K562 (cell line): ENCODE measurements at regions of chr4 and their contacts with region 1.

Region 1: DNA sequence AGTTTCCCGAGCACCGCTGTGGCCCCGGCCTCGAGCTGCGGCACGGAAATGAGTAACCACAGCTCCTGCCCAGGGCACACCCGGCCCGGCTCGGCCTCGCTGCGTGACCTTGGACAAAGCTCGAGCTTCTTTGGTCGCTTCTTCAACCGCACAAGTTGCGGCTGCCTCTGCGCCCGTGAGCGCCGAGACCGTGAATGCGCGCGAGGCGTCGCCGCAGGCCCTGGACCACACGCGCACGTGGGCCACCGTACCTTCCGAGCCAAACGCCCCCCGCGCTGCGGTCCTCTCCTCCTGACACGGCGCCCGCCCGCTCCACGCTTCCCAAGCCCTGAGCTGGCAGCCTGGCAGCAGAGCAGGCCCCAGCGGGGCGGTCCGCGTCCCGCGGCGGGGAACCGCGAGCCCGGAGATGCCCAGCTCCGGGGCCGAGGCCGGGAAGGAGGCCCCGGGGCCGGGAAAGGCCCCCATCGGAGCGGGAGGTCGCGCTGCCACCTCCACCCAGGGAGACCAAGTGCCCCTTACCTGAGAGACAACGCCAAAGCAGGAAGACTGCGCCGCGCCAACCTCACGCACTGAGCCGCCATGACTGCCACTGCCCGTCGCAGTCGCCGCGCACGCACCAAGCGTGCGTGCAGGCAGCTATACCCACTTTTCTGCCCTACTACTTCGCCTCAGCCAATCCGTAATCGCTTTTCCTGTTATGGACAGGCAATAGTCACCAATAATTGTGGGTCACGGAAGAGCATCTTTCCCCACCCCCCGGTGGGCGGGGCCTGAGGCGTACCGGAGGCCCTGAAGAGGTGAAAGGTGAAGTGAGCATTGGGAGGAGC is at the start of gene GRPEL1:
- DNase-seq: peak; percentile 71 to 99 (median 86)
- ATAC-seq: peak; percentile 90
- H3K4me3 ChIP-seq: peak within 1 kb of the TSS; percentile 58
- H3K27ac ChIP-seq: peak within 1 kb of the TSS; percentile 76
- H3K4me1 ChIP-seq: peaks cover 15 to 40% of the 10 kb centered on the region in 2 experiments; a peak in 4 of 5 replicates
- H3K27me3 ChIP-seq: no peaks in the 10 kb centered on the region
- CTCF ChIP-seq: no peak
- EP300 ChIP-seq: no peak
- POLR2A ChIP-seq: peak; percentile 94
- RAD21 ChIP-seq: no peak
- polyA plus RNA-seq, gene GRPEL1: 125 to 192 TPM

Region 2: DNA sequence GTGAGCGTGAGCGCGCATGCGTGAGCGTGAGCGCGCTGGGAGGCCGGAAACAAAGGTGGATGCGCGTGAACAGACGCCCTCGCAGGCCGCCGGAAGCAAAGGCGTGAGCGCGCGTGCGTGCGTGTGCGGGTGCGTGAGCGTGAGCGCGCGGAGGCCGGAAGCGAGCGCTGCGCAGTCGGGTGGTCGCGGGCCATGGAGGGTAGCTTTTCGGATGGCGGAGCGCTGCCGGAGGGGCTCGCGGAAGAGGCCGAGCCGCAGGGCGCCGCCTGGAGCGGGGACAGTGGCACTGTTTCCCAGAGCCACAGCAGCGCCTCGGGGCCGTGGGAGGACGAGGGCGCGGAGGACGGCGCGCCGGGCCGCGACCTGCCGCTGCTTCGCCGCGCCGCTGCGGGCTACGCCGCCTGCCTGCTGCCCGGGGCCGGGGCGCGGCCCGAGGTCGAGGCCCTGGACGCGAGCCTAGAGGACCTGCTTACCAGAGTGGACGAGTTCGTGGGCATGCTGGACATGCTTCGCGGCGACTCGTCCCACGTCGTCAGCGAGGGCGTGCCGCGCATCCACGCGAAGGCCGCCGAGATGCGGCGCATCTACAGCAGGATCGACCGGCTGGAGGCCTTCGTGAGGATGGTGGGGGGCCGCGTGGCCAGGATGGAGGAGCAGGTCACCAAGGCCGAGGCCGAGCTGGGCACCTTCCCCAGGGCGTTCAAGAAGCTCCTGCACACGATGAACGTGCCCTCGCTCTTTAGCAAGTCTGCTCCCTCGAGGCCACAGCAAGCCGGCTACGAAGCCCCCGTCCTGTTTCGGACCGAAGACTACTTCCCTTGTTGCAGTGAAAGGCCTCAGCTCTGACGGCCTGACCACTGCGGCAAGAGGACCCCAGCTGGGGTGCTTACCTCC is 351.4 kb before region 1 on chr4 and contains the start of gene BLOC1S4:
- CTCF ChIA-PET with region 1: interaction called, 12 read pairs
- POLR2A ChIA-PET with region 1: interaction called, 5 read pairs
- in situ Hi-C with region 1: loop called (anchors 5 kb)
- intact Hi-C with region 1: loop called (anchors 2 kb)
- DNase-seq: peak; percentile 94 to 96 (median 95)
- ATAC-seq: peak; percentile 78
- H3K4me3 ChIP-seq: peak within 1 kb of the TSS; percentile 58
- H3K27ac ChIP-seq: peak within 1 kb of the TSS; percentile 94
- H3K4me1 ChIP-seq: peaks cover 22 to 23% of the 10 kb centered on the region in 2 experiments; a peak in 4 of 5 replicates
- H3K27me3 ChIP-seq: no peaks in the 10 kb centered on the region
- CTCF ChIP-seq: peak in 2 of 3 experiments; percentile 14 to 26; a peak in 2 of 6 replicates
- EP300 ChIP-seq: no peak
- POLR2A ChIP-seq: peak; percentile 81
- RAD21 ChIP-seq: 0 out of 4 replicates have a peak, but pooled peaks of 1 of the 2 experiments have one; percentile 13
- polyA plus RNA-seq, gene BLOC1S4: 3.1 to 3.9 TPM

Region 3: GRCh38 chr4:6892190-6892908 is 175.3 kb before region 1 on chr4:
- CTCF ChIA-PET with region 1: no interaction called
- POLR2A ChIA-PET with region 1: no interaction called
- in situ Hi-C with region 1: no loop called
- intact Hi-C with region 1: loop called (anchors 5 kb)
- DNase-seq: peak; percentile 89 to 93 (median 89)
- ATAC-seq: peak; percentile 89
- H3K4me3 ChIP-seq: peak overlapping the region; percentile 1; the same call in 1 of the 2 replicates
- H3K27ac ChIP-seq: peak overlapping the region; percentile 80
- H3K4me1 ChIP-seq: peaks cover 35 to 60% of the 10 kb centered on the region in 2 experiments
- H3K27me3 ChIP-seq: no peaks in the 10 kb centered on the region
- CTCF ChIP-seq: peak; percentile 32 to 62 (median 53); a peak in 5 of 6 replicates
- EP300 ChIP-seq: no peak; the same call in 1 of the 2 replicates
- POLR2A ChIP-seq: peak; percentile 52; the same call in 1 of the 2 replicates
- RAD21 ChIP-seq: peak; percentile 33 to 62

Region 4: GRCh38 chr4:6909073-6909965 is 158.3 kb before region 1 on chr4 and contains the start of gene TBC1D14:
- CTCF ChIA-PET with region 1: interaction called, 14 read pairs
- POLR2A ChIA-PET with region 1: interaction called, 5 read pairs
- in situ Hi-C with region 1: loop called (anchors 5 kb)
- intact Hi-C with region 1: loop called (anchors 1 kb)
- DNase-seq: peak; percentile 90 to 96 (median 94)
- ATAC-seq: peak; percentile 86
- H3K4me3 ChIP-seq: peak within 1 kb of the TSS; percentile 94
- H3K27ac ChIP-seq: peak within 1 kb of the TSS; percentile 98
- H3K4me1 ChIP-seq: peaks cover 48 to 58% of the 10 kb centered on the region in 2 experiments
- H3K27me3 ChIP-seq: no peaks in the 10 kb centered on the region
- CTCF ChIP-seq: 0 out of 6 replicates have a peak, but pooled peaks of 2 of the 3 experiments have one; percentile 19 to 23
- EP300 ChIP-seq: 0 out of 2 replicates have a peak, but pooled peaks have one; percentile 27
- POLR2A ChIP-seq: peak; percentile 78
- RAD21 ChIP-seq: no peak
- polyA plus RNA-seq, gene TBC1D14: 2.1 to 2.7 TPM

Region 5: GRCh38 chr4:6986781-6987587 is 80.7 kb before region 1 on chr4:
- CTCF ChIA-PET with region 1: no interaction called
- POLR2A ChIA-PET with region 1: interaction called, 5 read pairs
- in situ Hi-C with region 1: no loop called
- intact Hi-C with region 1: loop called (anchors 1 kb)
- DNase-seq: peak; percentile 96 to 98 (median 98)
- ATAC-seq: peak; percentile 89
- H3K4me3 ChIP-seq: peak overlapping the region; percentile 71
- H3K27ac ChIP-seq: peak overlapping the region; percentile 92
- H3K4me1 ChIP-seq: peaks cover 31 to 44% of the 10 kb centered on the region in 2 experiments; a peak in 4 of 5 replicates
- H3K27me3 ChIP-seq: no peaks in the 10 kb centered on the region
- CTCF ChIP-seq: peak in 1 of 3 experiments; percentile 14; a peak in 2 of 6 replicates
- EP300 ChIP-seq: no peak
- POLR2A ChIP-seq: peak; percentile 79
- RAD21 ChIP-seq: no peak; a peak in 1 of 4 replicates

Region 6: GRCh38 chr4:7045961-7046921 is 21.4 kb before region 1 on chr4:
- CTCF ChIA-PET with region 1: interaction called, 6 read pairs
- POLR2A ChIA-PET with region 1: interaction called, 13 read pairs
- in situ Hi-C with region 1: no loop called
- intact Hi-C with region 1: no loop called
- DNase-seq: no peak
- ATAC-seq: no peak
- H3K4me3 ChIP-seq: no peak overlapping the region
- H3K27ac ChIP-seq: no peak overlapping the region
- H3K4me1 ChIP-seq: peaks cover 17 to 60% of the 10 kb centered on the region in 2 experiments; a peak in 4 of 5 replicates
- H3K27me3 ChIP-seq: no peaks in the 10 kb centered on the region
- CTCF ChIP-seq: no peak
- EP300 ChIP-seq: no peak
- POLR2A ChIP-seq: no peak
- RAD21 ChIP-seq: no peak

Region 7: GRCh38 chr4:7156761-7157488 is 89.3 kb after region 1 on chr4:
- CTCF ChIA-PET with region 1: no interaction called
- POLR2A ChIA-PET with region 1: no interaction called
- in situ Hi-C with region 1: no loop called
- intact Hi-C with region 1: no loop called
- DNase-seq: peak in 3 of 4 experiments; percentile 20 to 54 (median 50)
- ATAC-seq: peak; percentile 72
- H3K4me3 ChIP-seq: no peak overlapping the region
- H3K27ac ChIP-seq: no peak overlapping the region
- H3K4me1 ChIP-seq: peaks cover 14 to 15% of the 10 kb centered on the region in 2 experiments; a peak in 3 of 5 replicates
- H3K27me3 ChIP-seq: peaks cover 38 to 74% of the 10 kb centered on the region in 2 experiments
- CTCF ChIP-seq: peak; percentile 34 to 71 (median 49)
- EP300 ChIP-seq: no peak
- POLR2A ChIP-seq: no peak
- RAD21 ChIP-seq: no peak